ENCODE measurements at regions of chr1 and their contacts with region 1.

Region 1: GRCh38 chr1:230167419-230167852 is 100.4 kb downstream of the GALNT2 start:
- DNase-seq: peak in 8 of 9 donors; percentile 21 to 50 (median 33)
- ATAC-seq: peak; percentile 77
- H3K4me3 ChIP-seq: no peak overlapping the region
- H3K4me3 Mint-ChIP-seq: peak overlapping the region in 2 of 10 donors; percentile 7 to 36
- H3K27ac ChIP-seq: no peak overlapping the region
- H3K27ac Mint-ChIP-seq: peak overlapping the region in 1 of 9 donors; percentile 48
- H3K4me1 ChIP-seq: no peaks in the 10 kb centered on the region
- H3K4me1 Mint-ChIP-seq: peaks cover 23 to 34% (median 31%) of the 10 kb centered on the region in 7 donors
- H3K27me3 ChIP-seq: no peaks in the 10 kb centered on the region
- H3K27me3 Mint-ChIP-seq: no peaks in the 10 kb centered on the region

Region 2: DNA sequence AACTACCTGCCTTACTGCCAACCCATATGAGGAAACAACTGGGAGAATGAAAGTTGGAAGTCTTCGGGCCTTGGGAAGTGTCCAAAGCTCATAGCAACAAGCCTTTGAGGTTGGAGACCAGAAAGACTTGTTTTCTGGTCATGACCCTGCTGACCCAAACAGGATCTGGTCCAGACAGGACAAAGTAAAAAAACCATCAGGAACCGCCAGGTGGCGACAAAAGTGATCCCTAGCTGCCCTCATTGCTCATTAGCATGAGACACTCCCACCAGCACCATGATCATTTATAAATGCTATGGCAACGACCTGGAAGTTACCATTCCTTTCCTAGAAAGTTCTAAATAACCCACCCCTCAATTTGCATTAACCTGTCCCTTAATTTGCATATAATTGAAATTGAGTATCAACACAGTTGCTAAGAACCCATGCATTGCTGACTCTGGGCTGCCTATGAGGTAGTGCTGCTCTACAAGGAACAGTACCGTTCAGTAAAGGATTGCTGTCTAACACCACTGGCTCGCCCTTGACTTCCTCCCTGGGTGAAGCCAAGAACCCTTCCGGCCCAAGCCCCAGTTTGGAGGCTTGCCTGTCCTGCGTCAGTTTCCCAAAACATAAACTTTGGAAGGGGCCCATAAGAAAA is 452.4 kb before region 1 on chr1:
- CTCF ChIA-PET with region 1: no interaction called
- POLR2A ChIA-PET with region 1: no interaction called
- intact Hi-C with region 1: loop called in 1 of 2 experiments (anchors 1 kb)
- DNase-seq: peak in 1 of 9 donors; percentile 35
- ATAC-seq: no peak
- H3K4me3 ChIP-seq: no peak overlapping the region
- H3K4me3 Mint-ChIP-seq: no peak overlapping the region
- H3K27ac ChIP-seq: no peak overlapping the region
- H3K27ac Mint-ChIP-seq: no peak overlapping the region
- H3K4me1 ChIP-seq: no peaks in the 10 kb centered on the region
- H3K4me1 Mint-ChIP-seq: no peaks in the 10 kb centered on the region
- H3K27me3 ChIP-seq: no peaks in the 10 kb centered on the region
- H3K27me3 Mint-ChIP-seq: peaks cover 0 to 14% (median 2%) of the 10 kb centered on the region in 5 donors

Region 3: GRCh38 chr1:229972600-229973296 is 194.7 kb before region 1 on chr1:
- CTCF ChIA-PET with region 1: no interaction called
- POLR2A ChIA-PET with region 1: no interaction called
- intact Hi-C with region 1: loop called in 1 of 2 experiments (anchors 10 kb)
- DNase-seq: no peak
- ATAC-seq: no peak
- H3K4me3 ChIP-seq: no peak overlapping the region
- H3K4me3 Mint-ChIP-seq: no peak overlapping the region
- H3K27ac ChIP-seq: no peak overlapping the region
- H3K27ac Mint-ChIP-seq: no peak overlapping the region
- H3K4me1 ChIP-seq: no peaks in the 10 kb centered on the region
- H3K4me1 Mint-ChIP-seq: peaks cover 0 to 14% (median 7%) of the 10 kb centered on the region in 7 donors
- H3K27me3 ChIP-seq: no peaks in the 10 kb centered on the region
- H3K27me3 Mint-ChIP-seq: peaks cover 8 to 20% (median 15%) of the 10 kb centered on the region in 5 donors

Region 4: GRCh38 chr1:230109895-230110667 is 57.4 kb before region 1 on chr1:
- CTCF ChIA-PET with region 1: no interaction called
- POLR2A ChIA-PET with region 1: no interaction called
- intact Hi-C with region 1: loop called in 1 of 2 experiments (anchors 2 kb)
- DNase-seq: peak in 7 of 9 donors; percentile 25 to 72 (median 47)
- ATAC-seq: peak; percentile 73
- H3K4me3 ChIP-seq: no peak overlapping the region
- H3K4me3 Mint-ChIP-seq: peak overlapping the region in 6 of 10 donors; percentile 21 to 54 (median 39)
- H3K27ac ChIP-seq: no peak overlapping the region
- H3K27ac Mint-ChIP-seq: peak overlapping the region in 6 of 9 donors; percentile 34 to 84 (median 58)
- H3K4me1 ChIP-seq: peaks cover 0 to 4% of the 10 kb centered on the region in 2 donors
- H3K4me1 Mint-ChIP-seq: peaks cover 43 to 85% (median 68%) of the 10 kb centered on the region in 7 donors
- H3K27me3 ChIP-seq: no peaks in the 10 kb centered on the region
- H3K27me3 Mint-ChIP-seq: no peaks in the 10 kb centered on the region